ENCODE measurements at regions of chr1 and their contacts with region 1.

Region 1: GRCh38 chr1:230922620-230923019 is 54.3 kb upstream of the C1orf198 start:
- DNase-seq: no peak
- H3K4me3 ChIP-seq: no peak overlapping the region
- H3K27ac ChIP-seq: no peak overlapping the region
- H3K4me1 ChIP-seq: no peaks in the 10 kb centered on the region
- H3K27me3 ChIP-seq: no peaks in the 10 kb centered on the region
- CTCF ChIP-seq: no peak

Region 2: GRCh38 chr1:230753586-230754251 is 168.9 kb before region 1 on chr1:
- intact Hi-C with region 1: no loop called
- DNase-seq: peak in 4 of 5 donors; percentile 66 to 83 (median 78)
- H3K4me3 ChIP-seq: no peak overlapping the region
- H3K27ac ChIP-seq: no peak overlapping the region
- H3K4me1 ChIP-seq: peaks cover 0 to 3% (median 2%) of the 10 kb centered on the region in 3 donors
- H3K27me3 ChIP-seq: no peaks in the 10 kb centered on the region
- CTCF ChIP-seq: no peak

Region 3: GRCh38 chr1:231211005-231211857 is 288.6 kb after region 1 on chr1:
- intact Hi-C with region 1: loop called (anchors 10 kb)
- DNase-seq: peak; percentile 89 to 93 (median 91)
- H3K4me3 ChIP-seq: peak overlapping the region; percentile 61 to 71 (median 66)
- H3K27ac ChIP-seq: no peak overlapping the region
- H3K4me1 ChIP-seq: peaks cover 0 to 2% (median 0%) of the 10 kb centered on the region in 3 donors
- H3K27me3 ChIP-seq: no peaks in the 10 kb centered on the region
- CTCF ChIP-seq: peak; percentile 93

Measured in kidney (tissue), 22 donors.